Panc1 (cell line): ENCODE measurements at regions of chr10 and their contacts with region 1.

Region 1: GRCh38 chr10:2987186-2987768 is 80.1 kb upstream of the PFKP start:
- DNase-seq: no peak
- ATAC-seq: no peak
- H3K4me3 ChIP-seq: no peak overlapping the region
- H3K27ac ChIP-seq: no peak overlapping the region
- H3K4me1 ChIP-seq: peaks cover 5% of the 10 kb centered on the region
- H3K27me3 ChIP-seq: no peaks in the 10 kb centered on the region
- CTCF ChIP-seq: no peak

Region 2: DNA sequence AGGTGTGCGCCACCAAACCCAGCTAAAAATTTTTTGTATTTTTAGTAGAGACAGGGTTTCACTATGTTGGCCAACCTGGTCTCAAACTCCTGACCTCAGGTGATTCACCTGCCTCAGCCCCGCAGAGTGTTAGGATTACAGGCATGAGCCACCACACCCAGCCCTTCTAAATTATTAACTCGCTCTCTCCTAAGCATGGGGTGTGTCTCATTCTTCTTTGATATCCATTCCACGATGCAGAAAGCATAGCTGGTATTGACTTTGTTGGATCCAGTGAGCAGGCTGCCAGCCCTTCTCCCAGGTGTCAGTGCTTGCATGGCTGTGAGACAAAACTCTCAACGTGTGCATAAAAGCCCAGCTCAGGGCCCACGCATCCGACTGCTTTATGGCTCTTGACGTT is 174.0 kb before region 1 on chr10:
- CTCF ChIA-PET with region 1: no interaction called
- POLR2A ChIA-PET with region 1: no interaction called
- in situ Hi-C with region 1: no loop called
- intact Hi-C with region 1: no loop called
- DNase-seq: no peak
- ATAC-seq: no peak
- H3K4me3 ChIP-seq: no peak overlapping the region
- H3K27ac ChIP-seq: no peak overlapping the region
- H3K4me1 ChIP-seq: no peaks in the 10 kb centered on the region
- H3K27me3 ChIP-seq: no peaks in the 10 kb centered on the region
- CTCF ChIP-seq: no peak

Region 3: DNA sequence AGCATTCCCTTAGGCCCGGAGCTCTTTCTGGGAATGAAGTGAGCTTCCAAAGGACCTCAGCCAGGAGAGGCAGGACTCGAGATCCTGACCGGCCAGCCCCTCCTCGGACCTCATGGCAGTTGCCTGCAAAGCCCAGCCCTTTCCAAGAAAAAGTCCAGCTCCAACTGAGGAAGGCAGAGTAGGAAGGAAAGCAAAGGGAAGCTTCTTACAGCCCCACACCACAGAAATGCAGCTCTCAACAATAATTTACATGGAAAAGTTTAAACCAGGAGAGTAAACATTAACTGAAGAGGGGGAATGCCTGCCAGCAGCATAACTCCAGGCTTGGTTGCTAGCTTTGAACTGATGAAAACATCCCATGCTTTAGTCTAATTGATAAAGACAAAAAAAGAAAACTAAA is 73.8 kb before region 1 on chr10:
- CTCF ChIA-PET with region 1: no interaction called
- POLR2A ChIA-PET with region 1: no interaction called
- in situ Hi-C with region 1: no loop called
- intact Hi-C with region 1: no loop called
- DNase-seq: no peak
- ATAC-seq: no peak
- H3K4me3 ChIP-seq: no peak overlapping the region
- H3K27ac ChIP-seq: no peak overlapping the region
- H3K4me1 ChIP-seq: no peaks in the 10 kb centered on the region
- H3K27me3 ChIP-seq: no peaks in the 10 kb centered on the region
- CTCF ChIP-seq: no peak

Region 4: DNA sequence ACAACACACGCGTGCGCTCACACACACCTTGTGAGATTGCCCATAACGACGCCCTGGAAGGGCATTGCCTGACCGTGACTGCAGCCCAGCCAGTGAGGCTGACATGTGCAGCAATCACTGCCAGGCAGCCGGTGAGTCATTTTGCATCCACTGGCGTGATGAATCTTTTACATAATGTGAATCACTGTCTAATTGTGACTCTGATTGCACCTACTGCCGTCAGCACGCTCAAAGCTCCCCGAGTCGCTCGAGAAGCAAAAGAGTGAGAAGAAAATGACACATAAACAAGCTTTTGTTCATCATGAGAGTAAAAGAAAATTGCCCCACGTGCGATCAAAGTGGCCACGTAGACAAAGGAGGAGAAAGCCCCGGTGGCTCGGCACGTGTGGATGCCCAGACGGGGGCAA is 37.3 kb before region 1 on chr10:
- CTCF ChIA-PET with region 1: no interaction called
- POLR2A ChIA-PET with region 1: no interaction called
- in situ Hi-C with region 1: no loop called
- intact Hi-C with region 1: no loop called
- DNase-seq: peak; percentile 47
- ATAC-seq: peak; percentile 51
- H3K4me3 ChIP-seq: peak overlapping the region in 1 of 2 experiments; percentile 21; a peak in 1 of 4 replicates
- H3K27ac ChIP-seq: no peak overlapping the region
- H3K4me1 ChIP-seq: no peaks in the 10 kb centered on the region
- H3K27me3 ChIP-seq: peaks cover 3% of the 10 kb centered on the region; the same call in 1 of the 2 replicates
- CTCF ChIP-seq: no peak

Region 5: DNA sequence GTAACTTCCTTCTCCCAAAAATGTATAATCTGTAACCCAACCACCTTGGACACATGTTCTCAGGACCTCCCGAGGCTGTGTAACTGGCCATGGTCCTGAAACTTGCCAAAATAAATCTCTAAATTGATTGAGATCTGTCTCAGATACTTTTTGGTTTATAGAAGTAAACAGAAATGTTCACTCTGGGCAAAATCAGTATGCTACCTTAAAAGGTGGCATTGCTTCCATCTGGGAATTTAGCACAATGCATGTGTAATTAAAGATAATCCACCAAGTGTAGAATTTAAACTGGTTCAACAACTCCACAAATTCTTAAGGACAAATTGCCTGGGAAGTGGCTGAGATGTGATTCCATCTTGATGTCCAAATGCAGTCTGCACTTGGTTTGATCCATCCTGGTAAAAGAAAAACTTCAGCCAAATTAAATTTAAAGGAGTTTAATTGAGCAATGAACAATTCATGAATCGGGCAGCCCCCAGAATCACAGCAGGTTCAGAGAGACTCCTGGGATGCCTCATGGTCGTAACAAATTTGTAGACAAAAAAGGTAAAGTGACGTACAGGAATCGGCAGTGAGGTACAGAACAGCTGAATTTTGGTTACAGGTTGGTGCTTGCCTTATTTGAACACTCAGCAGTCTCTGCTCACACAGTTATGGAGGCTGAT is 22.5 kb before region 1 on chr10:
- CTCF ChIA-PET with region 1: no interaction called
- POLR2A ChIA-PET with region 1: interaction called, 10 read pairs
- in situ Hi-C with region 1: no loop called
- intact Hi-C with region 1: no loop called
- DNase-seq: no peak
- ATAC-seq: no peak
- H3K4me3 ChIP-seq: no peak overlapping the region
- H3K27ac ChIP-seq: no peak overlapping the region
- H3K4me1 ChIP-seq: no peaks in the 10 kb centered on the region
- H3K27me3 ChIP-seq: no peaks in the 10 kb centered on the region; the same call in 1 of the 2 replicates
- CTCF ChIP-seq: no peak